ENCODE measurements at regions of chr16 and their contacts with region 1.

Region 1: DNA sequence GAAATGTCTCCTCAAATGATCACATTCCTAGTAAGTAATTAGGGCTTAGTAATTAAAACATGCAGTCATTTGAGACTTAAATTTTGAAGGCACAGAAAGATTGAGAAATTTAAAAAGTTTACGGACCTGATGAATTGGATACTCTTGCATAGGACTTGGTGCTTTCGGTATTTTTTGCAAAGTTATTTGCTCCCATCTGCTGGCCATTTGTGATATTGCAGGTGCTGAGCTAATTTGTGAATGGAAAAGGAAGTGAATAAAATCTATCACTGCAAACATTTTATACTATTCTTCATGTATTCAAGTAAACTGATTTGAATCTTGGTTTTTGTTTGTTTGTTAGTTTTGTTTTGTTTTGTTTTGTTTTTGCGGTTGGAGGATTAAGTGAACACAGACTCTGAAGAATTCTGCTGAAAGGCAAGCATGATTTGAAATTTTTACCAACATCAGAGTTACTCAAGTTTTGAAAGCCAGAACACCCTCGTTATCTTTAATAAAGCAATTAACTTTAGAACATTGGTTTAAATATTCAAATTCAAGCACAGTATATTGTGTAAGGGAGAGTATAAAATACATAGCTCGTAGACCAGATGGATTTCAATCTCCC is 689.5 kb upstream of the RBFOX1 start:
- DNase-seq: peak in 1 of 3 donors; percentile 82
- ATAC-seq: peak; percentile 57
- H3K4me3 ChIP-seq: no peak overlapping the region
- H3K4me1 ChIP-seq: no peaks in the 10 kb centered on the region
- CTCF ChIP-seq: peak; percentile 77

Region 2: DNA sequence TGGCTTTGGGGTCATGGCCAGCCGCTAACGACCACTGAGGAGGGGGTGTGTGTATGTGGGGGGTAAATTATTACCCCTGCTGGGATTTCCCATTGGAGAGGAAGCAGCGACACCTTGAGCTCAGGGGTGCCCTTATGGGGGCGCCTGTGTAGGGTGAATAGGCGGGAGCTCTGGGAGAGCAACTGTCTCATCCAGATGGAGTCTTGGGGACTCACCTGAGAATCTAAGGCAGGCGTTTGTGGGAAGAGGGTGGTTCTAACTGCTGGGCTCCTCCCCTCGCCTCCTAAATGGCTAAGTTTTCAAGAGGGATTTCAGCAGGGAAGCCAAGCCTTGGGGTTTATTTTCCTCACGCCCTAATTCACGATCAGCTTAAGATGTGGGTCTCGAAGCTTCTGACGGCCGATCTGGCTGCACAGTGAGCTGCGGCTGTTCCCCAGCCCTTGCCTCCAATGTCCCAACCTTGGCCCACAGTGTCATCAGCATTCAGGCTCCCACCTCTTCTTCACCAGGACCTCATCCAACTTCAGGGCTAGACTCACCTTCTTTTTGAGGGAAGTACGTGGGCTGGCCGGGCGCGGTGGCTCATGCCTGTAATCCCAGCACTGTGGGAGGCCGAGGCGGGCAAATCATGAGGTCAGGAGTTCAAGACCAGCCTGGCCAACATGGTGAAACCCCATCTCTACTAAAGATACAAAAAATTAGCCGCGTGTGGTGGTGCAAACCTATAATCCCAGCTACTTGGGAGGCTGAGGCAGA is 1408.7 kb before region 1 on chr16:
- intact Hi-C with region 1: loop called in 1 of 2 experiments (anchors 10 kb)
- DNase-seq: no peak
- ATAC-seq: no peak
- H3K4me3 ChIP-seq: no peak overlapping the region
- H3K4me1 ChIP-seq: no peaks in the 10 kb centered on the region
- CTCF ChIP-seq: no peak

Region 3: GRCh38 chr16:6602405-6602804 is 40.8 kb before region 1 on chr16:
- intact Hi-C with region 1: no loop called
- DNase-seq: no peak
- ATAC-seq: no peak
- H3K4me3 ChIP-seq: no peak overlapping the region
- H3K4me1 ChIP-seq: no peaks in the 10 kb centered on the region
- CTCF ChIP-seq: no peak